Astrocyte of the cerebellum (primary cell): ENCODE measurements at regions of chr10 and their contacts with region 1.

Region 1: GRCh38 chr10:107919626-107920235 is 755.2 kb upstream of the SORCS1 start:
- DNase-seq: no peak
- H3K4me3 ChIP-seq: no peak overlapping the region
- CTCF ChIP-seq: no peak

Region 2: DNA sequence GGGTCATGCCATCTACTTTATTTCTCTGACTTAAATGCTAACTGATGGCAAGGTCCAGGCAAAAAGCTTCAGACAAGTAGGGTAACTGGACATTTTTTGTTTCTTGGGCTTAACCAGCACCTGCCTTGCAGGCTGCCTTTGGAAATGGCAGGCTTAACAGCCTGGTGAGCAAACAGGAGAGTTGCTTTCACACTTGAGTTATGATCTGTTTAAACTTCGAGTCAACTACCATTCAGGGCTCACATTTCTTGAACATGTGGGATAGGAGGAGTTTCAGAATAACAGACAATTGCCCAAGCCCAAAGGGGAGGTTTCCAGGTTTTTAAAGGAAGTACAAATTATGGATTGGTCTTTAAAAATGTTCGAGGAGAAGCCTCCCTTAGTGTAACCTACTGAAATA is 30.6 kb before region 1 on chr10:
- in situ Hi-C with region 1: loop called (anchors 5 kb)
- DNase-seq: no peak
- H3K4me3 ChIP-seq: no peak overlapping the region
- CTCF ChIP-seq: no peak